PC-3 (cell line): ENCODE measurements at regions of chr18 and their contacts with region 1.

Region 1: GRCh38 chr18:22813648-22814328 is 119.3 kb upstream of the RBBP8 start:
- DNase-seq: peak; percentile 70
- ATAC-seq: peak; percentile 85
- H3K4me3 ChIP-seq: no peak overlapping the region; the same call in 1 of the 2 replicates
- H3K27ac ChIP-seq: no peak overlapping the region
- H3K4me1 ChIP-seq: peaks cover 15% of the 10 kb centered on the region
- H3K27me3 ChIP-seq: no peaks in the 10 kb centered on the region
- CTCF ChIP-seq: peak; percentile 93

Region 2: GRCh38 chr18:22765896-22766295 is 47.9 kb before region 1 on chr18:
- CTCF ChIA-PET with region 1: no interaction called
- POLR2A ChIA-PET with region 1: no interaction called
- intact Hi-C with region 1: no loop called
- DNase-seq: no peak
- ATAC-seq: no peak
- H3K4me3 ChIP-seq: no peak overlapping the region
- H3K27ac ChIP-seq: no peak overlapping the region
- H3K4me1 ChIP-seq: no peaks in the 10 kb centered on the region
- H3K27me3 ChIP-seq: no peaks in the 10 kb centered on the region
- CTCF ChIP-seq: no peak

Region 3: DNA sequence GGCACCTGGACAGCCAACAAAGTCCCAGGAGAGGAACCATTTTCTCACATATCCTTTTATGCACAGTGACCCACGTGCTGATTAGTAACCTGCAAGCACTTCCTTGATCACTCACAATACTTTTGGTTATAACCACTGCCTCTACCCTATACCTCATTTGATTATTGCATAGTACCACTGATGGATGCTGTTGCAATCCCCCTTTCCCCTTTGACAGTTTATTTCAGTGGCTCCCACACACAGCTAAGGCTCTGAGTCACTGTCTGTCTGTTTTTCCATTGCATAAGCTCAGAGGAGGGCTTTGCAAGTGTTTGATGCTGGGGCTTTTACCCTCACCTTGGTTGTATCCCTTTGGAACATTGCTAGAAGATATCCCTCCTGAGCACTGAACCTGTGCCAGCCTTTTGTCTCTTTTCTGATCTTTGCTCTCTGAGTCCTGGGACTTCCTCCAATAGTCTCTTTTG is 17.7 kb after region 1 on chr18:
- CTCF ChIA-PET with region 1: no interaction called
- POLR2A ChIA-PET with region 1: no interaction called
- intact Hi-C with region 1: no loop called
- DNase-seq: peak; percentile 57
- ATAC-seq: no peak
- H3K4me3 ChIP-seq: no peak overlapping the region
- H3K27ac ChIP-seq: peak overlapping the region; percentile 32
- H3K4me1 ChIP-seq: peaks cover 33% of the 10 kb centered on the region
- H3K27me3 ChIP-seq: no peaks in the 10 kb centered on the region
- CTCF ChIP-seq: no peak

Region 4: DNA sequence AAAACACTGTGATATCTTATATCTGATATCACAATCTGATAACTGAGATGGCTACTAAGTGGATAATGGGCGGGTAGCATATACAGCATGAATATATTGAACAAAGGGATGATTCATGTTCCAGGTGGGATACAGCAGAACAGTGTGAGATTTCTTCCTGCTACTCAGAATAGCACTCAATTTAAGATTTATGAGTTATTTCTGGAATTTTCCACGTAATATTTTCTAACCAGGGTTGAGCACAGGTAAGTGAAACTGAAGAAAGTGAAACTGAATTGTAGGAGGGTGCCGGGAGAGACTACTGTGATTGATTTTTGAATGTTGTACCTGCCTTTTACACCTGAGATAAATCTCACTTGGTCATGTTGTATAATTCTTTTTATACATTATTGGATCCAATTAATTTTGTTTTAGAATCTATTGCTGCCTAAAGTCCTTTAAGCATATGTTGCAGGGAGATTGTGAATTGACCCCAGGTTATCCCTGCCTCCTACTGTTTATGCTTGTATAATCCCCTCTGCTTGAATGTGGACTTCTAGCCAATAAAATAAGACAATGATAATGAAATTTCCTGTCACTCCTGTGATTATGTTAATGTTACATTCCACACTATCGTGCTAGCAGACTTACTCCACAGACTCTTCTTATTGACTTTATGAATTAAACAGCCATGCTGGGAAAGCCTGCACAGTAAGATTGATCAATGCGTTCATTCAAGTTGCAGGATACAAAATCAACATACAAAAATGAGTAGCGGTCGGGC is 51.7 kb after region 1 on chr18:
- CTCF ChIA-PET with region 1: no interaction called
- POLR2A ChIA-PET with region 1: no interaction called
- intact Hi-C with region 1: no loop called
- DNase-seq: no peak
- ATAC-seq: no peak
- H3K4me3 ChIP-seq: no peak overlapping the region
- H3K27ac ChIP-seq: no peak overlapping the region
- H3K4me1 ChIP-seq: no peaks in the 10 kb centered on the region
- H3K27me3 ChIP-seq: no peaks in the 10 kb centered on the region
- CTCF ChIP-seq: no peak

Region 5: GRCh38 chr18:22983175-22983574 is 169.4 kb after region 1 on chr18:
- CTCF ChIA-PET with region 1: interaction called, 28 read pairs
- POLR2A ChIA-PET with region 1: no interaction called
- intact Hi-C with region 1: loop called (anchors 1 kb)
- DNase-seq: peak; percentile 67
- ATAC-seq: no peak
- H3K4me3 ChIP-seq: no peak overlapping the region
- H3K27ac ChIP-seq: no peak overlapping the region
- H3K4me1 ChIP-seq: peaks cover 7% of the 10 kb centered on the region
- H3K27me3 ChIP-seq: no peaks in the 10 kb centered on the region
- CTCF ChIP-seq: peak; percentile 69